HEK293T (cell line): ENCODE measurements at regions of chr12 and their contacts with region 1.

Region 1: DNA sequence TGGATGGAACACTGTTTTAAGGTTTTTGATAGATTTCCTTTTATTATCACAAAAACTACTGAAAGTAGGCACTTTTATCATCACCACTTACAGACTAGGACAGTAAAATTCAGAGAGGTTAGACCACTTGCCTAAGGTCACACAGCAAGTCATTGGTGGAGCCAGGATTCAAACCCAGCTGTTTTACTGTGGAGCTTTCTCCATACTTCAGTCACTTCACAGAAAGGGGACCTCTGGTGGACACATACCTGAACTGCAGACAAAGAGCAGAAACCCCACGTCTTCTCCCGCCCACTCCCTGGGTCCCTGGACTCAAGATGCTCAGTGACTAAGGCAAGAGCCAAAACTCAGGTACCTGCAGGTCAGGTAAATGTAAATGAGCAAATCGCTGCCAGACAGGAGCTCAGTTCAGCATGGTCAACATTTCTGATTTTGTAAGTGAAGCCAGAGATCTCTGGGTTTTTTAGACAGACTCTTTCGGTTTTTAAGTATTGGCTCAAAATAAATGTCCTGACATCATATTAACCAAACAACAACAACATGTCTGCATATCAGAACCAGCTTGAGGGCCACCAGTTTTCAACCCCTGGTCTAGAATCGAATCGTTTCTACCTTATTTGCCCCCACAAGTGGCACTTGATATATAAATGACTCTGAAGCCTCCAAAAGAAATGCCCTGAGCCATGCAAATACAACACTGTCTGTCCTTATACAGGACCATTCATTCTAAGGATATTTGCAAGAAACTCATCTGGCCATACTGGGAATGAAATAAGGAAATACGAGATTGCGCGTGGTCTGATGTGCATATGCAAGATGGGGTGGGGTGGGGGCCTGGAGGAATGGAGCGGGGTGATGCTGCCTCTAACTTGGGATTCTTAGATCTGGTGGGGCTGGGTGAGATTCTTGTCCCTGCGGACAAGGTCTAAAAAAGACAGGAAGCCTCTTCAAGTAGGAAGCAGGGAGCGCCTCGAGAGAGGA is 110.9 kb downstream of the KSR2 start:
- DNase-seq: peak; percentile 69

Region 2: DNA sequence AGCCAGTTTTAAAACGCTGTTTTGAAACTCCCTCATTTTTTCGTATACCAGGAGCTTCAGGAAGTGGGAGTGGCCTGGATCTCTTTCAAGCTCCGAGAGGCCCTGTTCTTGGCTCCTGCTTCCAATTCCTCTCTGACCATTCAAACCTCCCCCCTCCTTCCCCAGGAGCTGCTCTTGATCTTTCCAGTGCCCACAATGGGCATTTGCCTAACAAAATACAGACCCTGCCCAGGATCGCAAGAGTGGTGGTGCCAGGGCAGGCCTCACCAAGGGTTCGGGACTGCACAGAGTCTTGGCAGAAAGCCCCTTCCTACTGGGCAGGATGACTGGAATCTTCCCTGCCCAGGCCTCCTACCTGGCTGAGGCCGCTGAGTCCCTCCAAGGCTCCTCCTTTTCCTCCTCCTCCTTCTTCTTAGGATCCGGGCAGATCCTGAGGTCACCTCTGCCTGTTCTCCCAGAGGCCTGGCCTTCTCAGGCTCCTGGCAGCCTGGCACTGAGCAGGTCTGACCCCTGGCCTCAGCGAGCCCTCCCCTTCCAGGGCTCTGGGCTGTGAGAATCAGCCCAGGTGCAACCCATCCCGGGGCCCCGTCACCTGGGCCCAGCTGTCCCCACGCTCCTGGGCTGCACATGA is 449.6 kb before region 1 on chr12:
- CTCF ChIA-PET with region 1: no interaction called
- POLR2A ChIA-PET with region 1: no interaction called
- DNase-seq: no peak

Region 3: DNA sequence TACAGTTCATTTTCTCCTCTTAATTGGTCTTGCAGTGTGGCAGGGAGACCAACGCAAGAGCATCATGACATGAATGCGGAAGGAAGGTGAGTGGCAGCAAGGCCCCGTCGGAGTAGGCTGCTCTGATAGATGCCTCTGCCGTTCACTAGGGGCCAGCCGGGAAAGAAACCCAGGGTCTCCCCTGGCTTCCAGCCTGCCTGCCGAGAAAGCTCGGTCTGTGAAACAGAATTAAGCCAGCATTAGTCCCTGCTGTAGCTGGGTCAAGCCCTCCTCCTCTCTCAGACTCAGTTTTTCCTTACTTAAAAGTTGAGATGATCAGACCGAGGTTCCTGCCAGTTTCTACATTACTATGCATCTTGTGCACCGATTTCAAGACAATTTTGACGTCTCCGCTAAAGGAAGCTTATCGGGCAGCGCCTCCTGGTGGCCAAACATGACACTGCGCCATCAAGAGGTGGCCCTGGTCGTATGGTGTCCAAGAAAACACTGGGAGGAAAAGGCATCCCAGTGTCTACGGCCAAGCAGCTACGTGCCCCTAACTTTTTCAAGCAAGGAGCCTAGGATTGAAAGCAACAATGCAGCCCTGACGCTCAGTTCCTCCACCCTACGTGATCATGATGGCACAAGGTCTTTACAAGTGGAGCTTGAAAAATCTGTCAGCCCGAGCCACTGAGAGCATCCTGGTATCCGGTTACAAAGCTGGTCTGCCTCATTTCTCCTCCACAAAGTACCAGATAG is 20.8 kb before region 1 on chr12:
- CTCF ChIA-PET with region 1: interaction called, 13 read pairs
- POLR2A ChIA-PET with region 1: no interaction called
- DNase-seq: peak; percentile 78

Region 4: GRCh38 chr12:117919479-117919878 is 61.6 kb after region 1 on chr12:
- CTCF ChIA-PET with region 1: no interaction called
- POLR2A ChIA-PET with region 1: no interaction called
- DNase-seq: no peak